ENCODE measurements at regions of chr9 and their contacts with region 1.

Region 1: DNA sequence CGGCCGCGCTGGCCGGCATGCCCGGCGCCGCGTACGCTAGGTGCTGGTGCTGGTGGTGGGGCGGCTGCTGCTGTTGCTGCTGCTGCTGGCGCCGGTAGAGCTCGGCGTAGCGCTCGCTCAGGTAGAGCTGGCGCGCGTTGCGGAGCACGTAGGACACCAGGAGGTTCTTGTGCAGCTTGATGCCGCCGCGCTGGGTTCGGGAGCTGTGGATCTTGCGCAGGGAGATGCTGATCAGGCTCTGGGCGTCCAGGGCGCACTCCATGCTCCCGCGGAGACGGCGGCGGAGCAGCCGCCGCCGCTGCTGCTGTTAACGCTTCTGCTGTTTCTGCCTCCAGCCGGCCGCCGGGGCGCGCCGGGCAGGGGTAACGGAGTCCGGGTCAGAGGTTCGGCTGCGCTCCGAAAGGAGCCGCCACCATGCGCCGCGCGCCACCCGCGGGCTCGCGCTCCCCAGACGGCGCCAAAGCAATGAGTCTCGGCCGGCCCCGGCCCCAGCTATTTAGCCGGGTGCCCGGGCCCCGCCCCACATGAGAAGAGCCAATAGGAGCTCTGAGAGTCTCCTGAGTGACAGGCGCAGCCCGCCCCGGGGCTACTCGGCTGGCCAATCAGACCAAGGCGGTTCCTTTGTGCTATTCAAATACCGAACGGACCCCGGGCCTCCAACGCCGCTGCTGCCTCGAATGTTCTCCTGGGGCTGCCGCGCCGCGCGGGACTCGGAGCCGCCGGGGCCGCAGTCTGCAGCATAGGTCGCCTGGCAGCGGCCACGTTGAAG is at the start of gene IER5L:
- DNase-seq: peak; percentile 88
- H3K4me3 ChIP-seq: peak within 1 kb of the TSS; percentile 91
- H3K27ac ChIP-seq: peak within 1 kb of the TSS; percentile 61
- H3K27me3 ChIP-seq: no peaks in the 10 kb centered on the region
- CTCF ChIP-seq: no peak
- polyA plus RNA-seq, gene IER5L: 4.9 TPM in 2 replicates

Region 2: GRCh38 chr9:129139993-129140396 is 38.0 kb before region 1 on chr9:
- CTCF ChIA-PET with region 1: interaction called, 145 read pairs
- POLR2A ChIA-PET with region 1: interaction called, 44 read pairs
- DNase-seq: peak; percentile 99
- H3K4me3 ChIP-seq: peak overlapping the region; percentile 60
- H3K27ac ChIP-seq: peak overlapping the region; percentile 100
- H3K27me3 ChIP-seq: no peaks in the 10 kb centered on the region
- CTCF ChIP-seq: no peak

Region 3: GRCh38 chr9:129166623-129167557 is 11.1 kb before region 1 on chr9:
- CTCF ChIA-PET with region 1: interaction called, 19 read pairs
- POLR2A ChIA-PET with region 1: interaction called, 30 read pairs
- DNase-seq: no peak
- H3K4me3 ChIP-seq: peak overlapping the region; percentile 42
- H3K27ac ChIP-seq: peak overlapping the region; percentile 98
- H3K27me3 ChIP-seq: no peaks in the 10 kb centered on the region
- CTCF ChIP-seq: no peak

Region 4: DNA sequence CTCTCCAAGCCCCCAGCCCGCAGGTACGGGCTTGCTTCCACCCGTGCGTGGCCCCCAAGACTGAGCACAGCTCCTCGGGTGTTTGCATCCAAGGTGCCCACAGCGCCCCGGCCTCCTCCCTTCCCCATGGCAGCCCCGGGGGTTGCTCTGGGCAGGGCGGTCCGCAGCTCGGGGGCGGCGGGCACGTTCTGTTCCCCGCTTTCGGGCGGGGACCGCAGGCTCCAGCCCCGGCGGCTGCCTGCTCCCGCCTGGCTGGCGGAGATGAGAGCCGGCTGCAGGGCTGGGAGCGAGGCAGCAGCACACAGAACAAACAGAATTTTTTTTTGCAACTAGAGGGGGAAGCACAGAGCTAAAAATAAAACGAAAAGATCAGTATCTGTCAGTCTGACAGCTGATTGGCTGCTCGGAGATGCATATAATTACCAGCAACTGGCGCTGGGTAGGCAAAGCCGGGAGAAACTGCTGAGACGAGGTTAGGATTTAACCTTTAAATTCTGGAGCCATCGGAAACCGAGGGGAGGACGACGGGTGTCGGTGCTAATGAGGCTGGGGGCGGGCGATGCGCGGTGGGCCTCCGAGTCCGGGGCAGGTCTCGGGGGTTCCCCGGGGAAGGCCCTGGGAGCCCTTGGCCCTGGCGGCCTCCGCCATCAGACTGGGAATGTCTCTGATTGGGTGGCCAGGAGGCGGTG is 142.7 kb after region 1 on chr9:
- CTCF ChIA-PET with region 1: interaction called, 10 read pairs
- POLR2A ChIA-PET with region 1: interaction called, 20 read pairs
- DNase-seq: peak; percentile 58
- H3K4me3 ChIP-seq: peak overlapping the region; percentile 44
- H3K27ac ChIP-seq: peak overlapping the region; percentile 52
- H3K27me3 ChIP-seq: no peaks in the 10 kb centered on the region
- CTCF ChIP-seq: peak; percentile 31

Region 5: GRCh38 chr9:129383561-129384416 is 205.8 kb after region 1 on chr9:
- CTCF ChIA-PET with region 1: interaction called, 4 read pairs
- POLR2A ChIA-PET with region 1: interaction called, 10 read pairs
- DNase-seq: no peak
- H3K4me3 ChIP-seq: peak overlapping the region; percentile 45
- H3K27ac ChIP-seq: no peak overlapping the region
- H3K27me3 ChIP-seq: no peaks in the 10 kb centered on the region
- CTCF ChIP-seq: no peak; the same call in 1 of the 2 replicates

Region 6: DNA sequence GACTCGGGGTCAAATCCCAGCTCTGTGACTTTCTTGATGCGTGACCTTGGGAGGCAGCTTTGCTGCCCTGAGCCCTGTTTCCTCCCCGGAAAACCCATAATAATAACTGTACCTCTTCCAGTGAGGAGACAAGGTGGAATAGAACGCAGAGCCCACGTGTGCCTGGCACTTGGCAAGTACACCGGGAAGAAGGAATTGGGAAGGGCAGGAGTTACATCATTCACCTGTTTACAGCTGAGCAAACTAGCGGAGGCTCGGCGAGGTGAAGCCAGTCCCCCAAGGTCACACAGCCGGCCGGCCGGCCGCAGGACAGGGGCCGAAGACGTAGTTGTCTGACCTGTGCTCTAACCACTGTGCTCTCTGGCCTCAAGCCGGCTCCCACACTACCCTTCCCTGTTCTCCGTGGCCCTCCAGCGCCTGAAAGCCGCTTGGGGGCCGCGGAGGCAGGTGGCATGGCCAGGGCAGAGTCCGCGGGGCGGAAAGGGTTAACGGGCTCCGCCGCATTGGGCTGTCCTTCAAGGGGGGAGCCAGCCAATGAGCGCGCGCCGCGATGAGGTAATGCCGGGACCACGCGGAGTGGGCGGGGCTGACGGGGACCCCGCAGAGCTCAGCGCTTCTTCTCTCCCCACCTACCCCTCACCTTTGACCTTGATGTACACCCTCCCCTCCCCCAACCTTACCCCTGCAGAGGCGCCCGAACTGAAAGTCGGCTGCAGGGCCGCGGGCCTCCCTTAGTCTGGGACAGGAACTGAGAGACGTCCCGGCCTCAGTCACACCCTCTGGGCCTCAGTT is 317.8 kb after region 1 on chr9:
- CTCF ChIA-PET with region 1: interaction called, 6 read pairs
- POLR2A ChIA-PET with region 1: interaction called, 25 read pairs
- DNase-seq: peak; percentile 64
- H3K4me3 ChIP-seq: peak overlapping the region; percentile 76
- H3K27ac ChIP-seq: peak overlapping the region; percentile 91
- H3K27me3 ChIP-seq: no peaks in the 10 kb centered on the region
- CTCF ChIP-seq: no peak

Region 7: GRCh38 chr9:129617167-129617566 is 439.2 kb after region 1 on chr9:
- CTCF ChIA-PET with region 1: interaction called, 4 read pairs
- POLR2A ChIA-PET with region 1: interaction called, 12 read pairs
- DNase-seq: peak; percentile 67
- H3K4me3 ChIP-seq: no peak overlapping the region
- H3K27ac ChIP-seq: no peak overlapping the region
- H3K27me3 ChIP-seq: no peaks in the 10 kb centered on the region
- CTCF ChIP-seq: peak; percentile 73